PC-3 (cell line): ENCODE measurements at regions of chr2 and their contacts with region 1.

Region 1: GRCh38 chr2:46632349-46632748 is 153.0 kb downstream of the TMEM247 start:
- DNase-seq: peak; percentile 86
- ATAC-seq: peak; percentile 40; the same call in 1 of the 2 replicates
- H3K4me3 ChIP-seq: no peak overlapping the region
- H3K27ac ChIP-seq: no peak overlapping the region
- H3K4me1 ChIP-seq: peaks cover 8% of the 10 kb centered on the region; the same call in 1 of the 2 replicates
- H3K27me3 ChIP-seq: no peaks in the 10 kb centered on the region
- CTCF ChIP-seq: peak; percentile 77

Region 2: GRCh38 chr2:46351750-46352138 is 280.6 kb before region 1 on chr2:
- CTCF ChIA-PET with region 1: no interaction called
- POLR2A ChIA-PET with region 1: no interaction called
- intact Hi-C with region 1: no loop called
- DNase-seq: no peak
- ATAC-seq: no peak
- H3K4me3 ChIP-seq: no peak overlapping the region
- H3K27ac ChIP-seq: no peak overlapping the region
- H3K4me1 ChIP-seq: no peaks in the 10 kb centered on the region
- H3K27me3 ChIP-seq: no peaks in the 10 kb centered on the region
- CTCF ChIP-seq: no peak

Region 3: GRCh38 chr2:46887028-46887885 is 254.9 kb after region 1 on chr2:
- CTCF ChIA-PET with region 1: no interaction called
- POLR2A ChIA-PET with region 1: no interaction called
- intact Hi-C with region 1: loop called (anchors 1 kb)
- DNase-seq: peak; percentile 25
- ATAC-seq: no peak
- H3K4me3 ChIP-seq: no peak overlapping the region
- H3K27ac ChIP-seq: peak overlapping the region; percentile 19
- H3K4me1 ChIP-seq: peaks cover 23% of the 10 kb centered on the region
- H3K27me3 ChIP-seq: no peaks in the 10 kb centered on the region
- CTCF ChIP-seq: no peak

Region 4: DNA sequence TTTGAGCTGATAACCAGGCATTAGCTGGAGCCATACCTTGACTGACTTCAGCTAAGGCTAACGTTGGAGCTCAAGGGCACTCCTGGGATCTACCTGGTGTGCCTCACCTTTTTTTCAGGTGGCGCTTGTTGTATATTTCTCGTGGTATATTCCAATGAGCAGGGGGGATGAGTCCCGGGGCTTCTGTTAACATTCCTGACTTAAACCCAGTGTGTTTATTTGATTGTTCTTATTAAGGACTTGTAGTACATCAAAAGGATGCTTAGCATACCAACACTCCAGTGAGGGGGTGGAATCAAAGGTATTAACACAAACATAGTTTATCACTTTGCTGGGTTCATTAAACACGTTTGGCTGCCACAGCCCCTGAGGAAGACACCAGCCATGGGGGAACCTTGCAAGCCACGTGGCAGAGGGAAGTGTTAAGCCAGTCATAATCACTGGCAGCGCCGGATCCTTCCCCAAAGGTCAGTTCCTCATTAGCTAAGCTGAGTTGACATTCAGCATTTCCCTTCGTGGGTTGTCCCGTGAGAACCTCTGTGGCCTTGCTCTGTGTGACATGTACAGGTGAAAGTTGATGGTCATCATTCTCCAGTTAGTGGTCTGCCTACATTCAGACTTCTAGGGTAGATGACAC is 402.7 kb after region 1 on chr2:
- CTCF ChIA-PET with region 1: no interaction called
- POLR2A ChIA-PET with region 1: no interaction called
- intact Hi-C with region 1: no loop called
- DNase-seq: no peak
- ATAC-seq: no peak
- H3K4me3 ChIP-seq: no peak overlapping the region
- H3K27ac ChIP-seq: peak overlapping the region; percentile 96
- H3K4me1 ChIP-seq: peaks cover 74% of the 10 kb centered on the region
- H3K27me3 ChIP-seq: no peaks in the 10 kb centered on the region
- CTCF ChIP-seq: no peak